CD8-positive, alpha-beta T cell (primary cell): ENCODE measurements at regions of chr7 and their contacts with region 1.

Region 1: DNA sequence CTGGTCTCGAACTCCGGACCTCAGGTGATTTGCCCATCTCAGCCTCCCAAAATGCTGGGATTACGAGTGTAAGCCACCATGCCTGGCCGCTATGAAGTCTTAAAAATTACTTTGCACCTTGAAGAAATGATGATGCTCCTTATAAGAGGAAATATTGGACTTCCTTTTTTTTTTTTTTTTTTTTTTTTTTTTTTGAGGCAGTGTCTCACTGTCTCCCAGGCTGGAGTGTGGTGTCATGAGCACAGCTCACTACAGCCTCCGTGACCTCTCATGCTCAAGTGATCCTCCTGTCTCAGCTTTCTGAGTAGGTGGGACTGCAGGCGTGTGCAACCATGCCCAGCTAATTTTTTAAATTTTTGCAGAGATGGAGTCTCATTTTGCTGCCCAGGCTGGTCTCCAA is 65.3 kb downstream of the KMT2E start:
- DNase-seq: no peak
- ATAC-seq: no peak
- H3K4me3 ChIP-seq: no peak overlapping the region
- H3K4me3 Mint-ChIP-seq: no peak overlapping the region
- H3K27ac ChIP-seq: no peak overlapping the region
- H3K27ac Mint-ChIP-seq: no peak overlapping the region
- H3K4me1 ChIP-seq: no peaks in the 10 kb centered on the region
- H3K4me1 Mint-ChIP-seq: peaks cover 17% of the 10 kb centered on the region
- H3K27me3 ChIP-seq: no peaks in the 10 kb centered on the region
- H3K27me3 Mint-ChIP-seq: no peaks in the 10 kb centered on the region
- CTCF ChIP-seq: no peak

Region 2: DNA sequence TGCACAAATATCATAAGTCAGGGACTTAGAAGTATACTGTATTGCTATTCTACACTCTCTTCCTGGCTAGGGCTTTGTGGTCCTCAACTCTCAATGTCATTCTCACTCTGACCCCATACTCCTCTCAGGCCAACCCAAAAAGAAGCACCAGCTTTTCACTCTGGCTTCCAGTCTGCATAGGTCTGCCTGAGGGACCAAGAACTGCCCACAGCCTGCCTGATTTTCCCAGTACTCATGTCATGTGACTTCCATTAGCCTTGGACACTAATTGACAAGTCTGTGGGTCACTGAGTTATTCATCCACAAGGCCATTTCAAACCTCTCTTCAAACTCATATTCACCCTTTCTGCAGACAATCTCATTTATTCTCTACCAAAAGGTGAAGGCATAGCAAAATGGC is 1762.3 kb before region 1 on chr7:
- CTCF ChIA-PET with region 1: no interaction called
- POLR2A ChIA-PET with region 1: no interaction called
- intact Hi-C with region 1: loop called in 1 of 2 experiments (anchors 10 kb)
- DNase-seq: no peak
- ATAC-seq: no peak
- H3K4me3 ChIP-seq: no peak overlapping the region
- H3K4me3 Mint-ChIP-seq: no peak overlapping the region
- H3K27ac ChIP-seq: no peak overlapping the region
- H3K27ac Mint-ChIP-seq: no peak overlapping the region
- H3K4me1 ChIP-seq: no peaks in the 10 kb centered on the region
- H3K4me1 Mint-ChIP-seq: peaks cover 3% of the 10 kb centered on the region
- H3K27me3 ChIP-seq: no peaks in the 10 kb centered on the region
- H3K27me3 Mint-ChIP-seq: no peaks in the 10 kb centered on the region
- CTCF ChIP-seq: no peak

Region 3: GRCh38 chr7:105060437-105060836 is 18.9 kb before region 1 on chr7:
- CTCF ChIA-PET with region 1: no interaction called
- POLR2A ChIA-PET with region 1: interaction called, 3 read pairs
- intact Hi-C with region 1: loop called in 1 of 2 experiments (anchors 2 kb)
- DNase-seq: no peak
- ATAC-seq: no peak
- H3K4me3 ChIP-seq: no peak overlapping the region
- H3K4me3 Mint-ChIP-seq: no peak overlapping the region
- H3K27ac ChIP-seq: no peak overlapping the region
- H3K27ac Mint-ChIP-seq: peak overlapping the region; percentile 58
- H3K4me1 ChIP-seq: peaks cover 40% of the 10 kb centered on the region
- H3K4me1 Mint-ChIP-seq: peaks cover 75% of the 10 kb centered on the region
- H3K27me3 ChIP-seq: no peaks in the 10 kb centered on the region
- H3K27me3 Mint-ChIP-seq: no peaks in the 10 kb centered on the region
- CTCF ChIP-seq: no peak

Region 4: DNA sequence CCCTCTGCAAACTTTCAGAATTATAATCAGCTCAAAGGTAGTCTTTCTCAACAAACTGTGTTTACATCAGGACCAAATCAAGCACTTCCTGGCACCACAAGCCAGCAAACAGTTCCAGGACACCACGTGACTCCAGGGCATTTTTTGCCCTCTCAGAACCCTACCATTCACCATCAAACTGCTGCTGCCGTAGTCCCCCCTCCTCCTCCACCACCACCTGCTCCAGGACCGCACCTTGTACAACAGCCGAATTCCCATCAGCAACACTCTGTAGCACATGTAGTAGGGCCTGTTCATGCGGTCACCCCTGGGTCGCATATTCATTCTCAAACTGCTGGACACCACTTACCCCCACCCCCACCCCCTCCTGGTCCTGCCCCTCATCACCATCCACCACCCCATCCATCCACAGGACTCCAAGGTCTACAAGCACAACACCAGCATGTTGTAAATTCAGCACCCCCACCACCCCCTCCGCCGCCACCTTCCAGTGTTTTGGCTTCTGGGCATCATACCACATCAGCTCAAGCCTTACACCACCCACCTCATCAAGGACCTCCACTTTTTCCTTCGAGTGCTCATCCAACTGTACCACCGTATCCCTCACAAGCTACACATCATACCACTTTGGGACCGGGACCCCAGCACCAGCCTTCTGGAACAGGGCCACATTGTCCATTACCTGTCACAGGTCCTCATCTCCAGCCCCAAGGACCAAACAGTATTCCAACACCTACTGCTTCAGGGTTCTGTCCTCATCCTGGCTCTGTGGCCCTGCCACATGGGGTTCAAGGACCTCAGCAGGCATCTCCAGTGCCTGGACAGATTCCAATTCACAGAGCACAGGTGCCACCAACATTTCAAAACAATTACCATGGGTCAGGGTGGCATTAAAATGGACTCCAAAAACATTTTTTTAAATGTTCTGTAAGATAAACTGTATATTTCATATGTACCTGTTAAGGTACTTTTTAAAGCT is 33.4 kb after region 1 on chr7:
- CTCF ChIA-PET with region 1: no interaction called
- POLR2A ChIA-PET with region 1: no interaction called
- intact Hi-C with region 1: loop called (anchors 5 kb)
- DNase-seq: no peak
- ATAC-seq: peak; percentile 16
- H3K4me3 ChIP-seq: no peak overlapping the region
- H3K4me3 Mint-ChIP-seq: no peak overlapping the region
- H3K27ac ChIP-seq: no peak overlapping the region
- H3K27ac Mint-ChIP-seq: peak overlapping the region; percentile 56
- H3K4me1 ChIP-seq: no peaks in the 10 kb centered on the region
- H3K4me1 Mint-ChIP-seq: peaks cover 3% of the 10 kb centered on the region
- H3K27me3 ChIP-seq: no peaks in the 10 kb centered on the region
- H3K27me3 Mint-ChIP-seq: no peaks in the 10 kb centered on the region
- CTCF ChIP-seq: no peak